ENCODE measurements at regions of chr11 and their contacts with region 1.

Region 1: DNA sequence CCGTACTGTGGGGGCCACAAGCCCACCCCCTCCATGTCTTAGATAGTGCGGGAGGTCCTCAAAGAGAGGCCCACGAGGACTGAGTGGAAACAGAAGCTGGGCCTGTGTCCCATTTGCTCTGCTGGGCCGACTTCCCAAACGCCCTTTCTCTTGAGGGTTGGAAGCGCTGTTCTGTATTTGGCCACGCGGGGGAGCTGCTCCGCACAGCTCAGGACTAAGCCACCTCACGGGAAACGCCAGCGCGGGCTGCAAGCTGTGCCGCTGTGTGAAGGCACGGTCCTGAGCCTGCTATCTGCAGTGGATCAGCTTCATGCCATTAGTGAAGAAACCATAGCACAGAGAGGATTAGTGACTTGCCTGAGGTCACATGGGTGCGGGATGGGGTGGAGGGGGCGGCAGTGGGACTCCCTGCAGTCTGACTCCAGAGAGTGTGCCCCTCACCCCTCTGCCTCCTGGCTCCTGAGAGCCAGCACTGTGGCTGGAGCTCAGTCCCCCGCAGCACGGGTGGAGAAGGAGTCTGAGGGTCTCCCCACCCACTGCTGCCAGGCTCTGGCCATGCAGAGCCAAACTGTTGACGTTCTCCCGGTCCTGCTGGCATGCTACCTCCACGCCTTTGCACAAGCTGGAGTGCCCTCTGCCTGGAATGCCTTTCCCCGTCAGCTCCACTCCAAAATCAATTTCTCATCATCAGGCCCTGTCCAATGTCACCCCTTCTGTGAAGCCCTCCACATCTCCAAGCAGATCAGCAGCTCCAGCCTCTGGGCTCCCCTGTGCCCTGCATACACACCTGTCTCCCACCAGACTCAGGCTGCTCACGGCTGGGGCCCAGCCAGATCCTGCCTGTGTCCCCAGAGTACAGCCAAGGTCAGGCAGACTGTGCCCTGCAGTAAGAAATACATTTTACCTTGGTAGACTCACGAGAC is 51.5 kb upstream of the LRRC32 start:
- DNase-seq: peak; percentile 62 to 91 (median 78)
- ATAC-seq: peak; percentile 98
- H3K4me3 ChIP-seq: no peak overlapping the region
- H3K27ac ChIP-seq: no peak overlapping the region
- H3K4me1 ChIP-seq: peaks cover 4 to 18% of the 10 kb centered on the region in 2 experiments; a peak in 4 of 5 replicates
- H3K27me3 ChIP-seq: 0 out of 5 replicates have a peak, but pooled peaks cover 2 to 5% of the 10 kb centered on the region in 2 experiments
- CTCF ChIP-seq: peak; percentile 92
- EP300 ChIP-seq: no peak
- POLR2A ChIP-seq: no peak
- RAD21 ChIP-seq: peak; percentile 54 to 78

Region 2: GRCh38 chr11:76491656-76492055 is 230.4 kb before region 1 on chr11:
- CTCF ChIA-PET with region 1: no interaction called
- POLR2A ChIA-PET with region 1: no interaction called
- in situ Hi-C with region 1: no loop called
- intact Hi-C with region 1: no loop called
- DNase-seq: no peak
- ATAC-seq: no peak
- H3K4me3 ChIP-seq: no peak overlapping the region
- H3K27ac ChIP-seq: no peak overlapping the region
- H3K4me1 ChIP-seq: no peaks in the 10 kb centered on the region
- H3K27me3 ChIP-seq: no peaks in the 10 kb centered on the region
- CTCF ChIP-seq: no peak
- EP300 ChIP-seq: no peak
- POLR2A ChIP-seq: no peak
- RAD21 ChIP-seq: no peak

Region 3: DNA sequence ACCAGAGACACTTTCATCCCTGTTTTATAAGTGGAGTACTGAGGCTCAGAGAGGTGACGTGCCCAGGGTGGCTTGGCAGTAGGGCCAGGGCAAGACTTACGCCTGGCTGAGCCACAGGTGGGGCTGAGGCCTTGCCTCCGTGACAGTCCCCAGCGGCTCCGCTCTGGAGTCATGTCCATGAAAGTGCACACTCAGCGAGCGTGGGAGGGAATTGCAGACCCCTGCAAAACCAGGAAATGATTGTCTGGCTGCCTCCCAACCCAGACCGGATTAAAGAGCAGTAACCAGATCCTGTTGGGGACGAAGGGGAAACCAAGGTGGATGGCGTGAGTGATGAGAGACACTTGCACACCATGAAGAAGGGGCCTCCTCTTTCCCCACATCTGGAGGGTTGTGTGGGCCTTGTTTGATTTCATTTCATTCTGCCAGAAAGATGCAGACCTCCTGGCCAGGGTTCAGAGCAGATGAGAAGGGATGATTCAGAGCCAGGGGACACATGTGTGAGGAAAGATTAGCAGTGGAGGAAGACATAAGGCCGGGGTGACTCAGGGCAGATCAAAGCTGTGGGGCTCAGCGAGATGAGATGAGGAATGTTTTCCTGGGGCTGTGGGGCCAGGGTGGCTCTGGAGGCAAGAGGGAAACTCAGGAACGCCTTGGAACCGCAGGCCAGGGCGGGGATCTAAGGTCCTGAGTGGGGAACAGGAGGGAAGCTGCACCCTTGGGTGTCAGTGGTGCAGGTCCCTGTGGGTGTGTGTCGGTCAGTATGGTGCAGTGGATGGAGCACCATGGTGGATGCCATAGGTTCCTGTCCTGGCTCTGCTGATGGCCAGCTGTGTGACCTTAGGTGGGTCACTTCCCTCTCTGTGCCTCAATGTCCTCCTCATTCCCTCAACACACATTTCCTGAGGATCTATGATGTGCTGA is 21.6 kb before region 1 on chr11:
- CTCF ChIA-PET with region 1: interaction called, 3 read pairs
- POLR2A ChIA-PET with region 1: interaction called, 5 read pairs
- in situ Hi-C with region 1: no loop called
- intact Hi-C with region 1: loop called (anchors 2 kb)
- DNase-seq: peak; percentile 91 to 96 (median 92)
- ATAC-seq: peak; percentile 83
- H3K4me3 ChIP-seq: no peak overlapping the region
- H3K27ac ChIP-seq: peak overlapping the region; percentile 90
- H3K4me1 ChIP-seq: peaks cover 61 to 67% of the 10 kb centered on the region in 2 experiments
- H3K27me3 ChIP-seq: no peaks in the 10 kb centered on the region
- CTCF ChIP-seq: no peak
- EP300 ChIP-seq: peak; percentile 97
- POLR2A ChIP-seq: peak; percentile 37; the same call in 1 of the 2 replicates
- RAD21 ChIP-seq: 0 out of 4 replicates have a peak, but pooled peaks of 1 of the 2 experiments have one; percentile 2

Region 4: DNA sequence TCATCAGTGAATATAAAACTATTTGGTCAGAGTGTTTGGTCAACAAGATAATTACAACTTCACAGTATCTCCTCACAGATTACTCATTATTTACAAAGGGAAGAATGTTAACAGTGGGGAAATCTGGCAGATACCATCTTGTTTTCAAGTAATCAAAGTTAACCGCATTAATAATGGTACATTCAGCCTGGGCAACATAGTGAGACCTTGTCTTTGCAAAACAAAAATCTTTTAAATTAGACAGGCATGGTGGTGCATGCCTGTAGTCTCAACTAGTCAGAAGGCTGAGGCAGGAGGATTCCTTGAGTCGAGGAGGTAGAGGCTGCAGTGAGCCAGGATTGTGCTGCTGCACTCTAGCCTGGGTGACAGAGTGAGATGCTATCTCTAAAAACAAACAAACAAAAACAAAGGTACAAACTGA is 217.2 kb after region 1 on chr11:
- CTCF ChIA-PET with region 1: no interaction called
- POLR2A ChIA-PET with region 1: no interaction called
- in situ Hi-C with region 1: no loop called
- intact Hi-C with region 1: no loop called
- DNase-seq: no peak
- ATAC-seq: no peak
- H3K4me3 ChIP-seq: no peak overlapping the region
- H3K27ac ChIP-seq: no peak overlapping the region
- H3K4me1 ChIP-seq: no peaks in the 10 kb centered on the region
- H3K27me3 ChIP-seq: no peaks in the 10 kb centered on the region
- CTCF ChIP-seq: no peak
- EP300 ChIP-seq: no peak
- POLR2A ChIP-seq: no peak
- RAD21 ChIP-seq: no peak

Region 5: DNA sequence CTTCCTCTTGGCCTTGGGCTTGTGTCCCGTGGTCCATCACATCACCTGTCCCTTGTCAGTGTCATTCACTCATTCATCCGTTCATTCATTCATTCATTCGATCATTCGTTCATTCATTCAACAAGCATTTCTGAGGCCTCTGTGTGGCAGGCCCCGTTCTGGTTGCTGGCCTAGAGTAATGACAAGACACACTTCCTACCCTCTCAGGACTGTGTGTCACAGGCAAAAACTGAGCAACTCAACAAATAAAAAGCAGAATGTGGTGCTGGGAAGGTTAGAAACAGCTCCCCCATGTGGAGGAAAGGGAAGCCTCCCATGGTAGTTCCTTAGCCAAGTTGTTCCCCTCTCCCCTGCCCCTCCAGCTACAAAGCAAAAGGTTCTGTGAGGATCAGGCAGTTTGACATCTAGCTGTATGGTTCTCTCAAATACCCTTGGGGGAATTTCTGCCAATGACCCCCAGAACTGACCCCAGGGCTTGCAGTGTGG is 379.1 kb after region 1 on chr11:
- CTCF ChIA-PET with region 1: no interaction called
- POLR2A ChIA-PET with region 1: no interaction called
- in situ Hi-C with region 1: loop called (anchors 10 kb)
- intact Hi-C with region 1: no loop called
- DNase-seq: peak; percentile 60 to 72 (median 70)
- ATAC-seq: peak; percentile 84
- H3K4me3 ChIP-seq: no peak overlapping the region
- H3K27ac ChIP-seq: no peak overlapping the region
- H3K4me1 ChIP-seq: peaks cover 0 to 15% of the 10 kb centered on the region in 2 experiments; a peak in 1 of 5 replicates
- H3K27me3 ChIP-seq: peaks cover 8 to 58% of the 10 kb centered on the region in 2 experiments; a peak in 4 of 5 replicates
- CTCF ChIP-seq: peak; percentile 72 to 77 (median 73)
- EP300 ChIP-seq: no peak
- POLR2A ChIP-seq: no peak
- RAD21 ChIP-seq: peak; percentile 23 to 53; a peak in 3 of 4 replicates

Measured in K562 (cell line).